HCT116 (cell line): ENCODE measurements at regions of chr3 and their contacts with region 1.

Region 1: DNA sequence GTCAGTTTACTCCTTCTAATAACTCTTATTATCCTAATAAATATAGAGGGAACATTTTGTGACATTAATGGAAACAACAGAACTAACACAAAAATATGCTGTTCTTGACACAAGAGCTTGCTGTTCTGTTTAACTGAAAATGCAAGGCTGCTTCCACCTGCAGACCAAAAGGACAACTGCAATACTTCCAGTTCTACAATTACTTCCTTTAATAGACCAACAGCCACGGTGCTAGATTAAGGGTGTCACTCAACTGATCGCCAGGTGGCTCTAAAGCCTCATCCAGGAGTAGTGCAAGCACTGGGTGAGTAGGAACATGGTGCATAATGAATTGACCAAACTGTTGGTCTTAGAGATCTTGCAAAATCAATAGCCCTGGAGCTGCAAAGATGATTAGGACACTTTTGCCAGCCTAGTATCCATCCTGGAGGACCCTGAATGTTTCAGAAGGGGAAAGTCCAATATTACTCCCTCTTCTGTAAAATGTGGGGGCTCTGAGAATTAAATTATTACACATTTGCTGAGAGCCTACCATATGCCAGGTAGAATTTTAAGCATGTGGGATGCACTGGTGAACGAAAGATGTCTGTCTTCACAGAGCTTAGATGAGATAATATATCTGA is 3.6 kb upstream of the CLDN16 start:
- DNase-seq: peak; percentile 87
- ATAC-seq: peak; percentile 98
- H3K4me3 ChIP-seq: no peak overlapping the region
- H3K27ac ChIP-seq: no peak overlapping the region
- H3K4me1 ChIP-seq: peaks cover 5 to 18% of the 10 kb centered on the region in 2 experiments; a peak in 2 of 4 replicates
- H3K27me3 ChIP-seq: no peaks in the 10 kb centered on the region
- CTCF ChIP-seq: peak; percentile 71 to 98 (median 78)
- POLR2A ChIP-seq: no peak
- RAD21 ChIP-seq: peak; percentile 98

Region 2: DNA sequence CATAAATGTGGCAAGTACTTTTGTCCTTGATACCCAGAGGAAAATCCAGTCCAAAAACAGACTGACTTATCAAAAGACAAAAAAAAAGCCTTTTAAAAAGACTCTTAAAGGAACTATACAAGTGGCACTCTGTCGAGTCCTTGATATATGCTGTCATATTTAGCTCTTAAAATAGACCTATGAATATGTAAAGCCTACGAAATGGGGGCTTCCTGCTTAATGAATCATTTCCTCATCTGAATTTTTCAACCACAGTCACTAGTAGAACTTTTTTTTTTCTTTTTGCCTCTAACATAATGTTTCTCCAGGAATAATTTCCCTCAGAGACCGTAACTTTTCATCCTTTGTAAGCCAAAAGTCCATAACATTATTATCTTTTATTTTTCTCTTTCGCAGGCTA is 359.4 kb before region 1 on chr3:
- CTCF ChIA-PET with region 1: no interaction called
- POLR2A ChIA-PET with region 1: no interaction called
- RAD21 ChIA-PET with region 1: no interaction called
- intact Hi-C with region 1: loop called (anchors 10 kb)
- DNase-seq: no peak
- ATAC-seq: no peak
- H3K4me3 ChIP-seq: no peak overlapping the region
- H3K27ac ChIP-seq: no peak overlapping the region
- H3K4me1 ChIP-seq: no peaks in the 10 kb centered on the region
- H3K27me3 ChIP-seq: no peaks in the 10 kb centered on the region
- CTCF ChIP-seq: no peak
- POLR2A ChIP-seq: no peak
- RAD21 ChIP-seq: no peak

Region 3: DNA sequence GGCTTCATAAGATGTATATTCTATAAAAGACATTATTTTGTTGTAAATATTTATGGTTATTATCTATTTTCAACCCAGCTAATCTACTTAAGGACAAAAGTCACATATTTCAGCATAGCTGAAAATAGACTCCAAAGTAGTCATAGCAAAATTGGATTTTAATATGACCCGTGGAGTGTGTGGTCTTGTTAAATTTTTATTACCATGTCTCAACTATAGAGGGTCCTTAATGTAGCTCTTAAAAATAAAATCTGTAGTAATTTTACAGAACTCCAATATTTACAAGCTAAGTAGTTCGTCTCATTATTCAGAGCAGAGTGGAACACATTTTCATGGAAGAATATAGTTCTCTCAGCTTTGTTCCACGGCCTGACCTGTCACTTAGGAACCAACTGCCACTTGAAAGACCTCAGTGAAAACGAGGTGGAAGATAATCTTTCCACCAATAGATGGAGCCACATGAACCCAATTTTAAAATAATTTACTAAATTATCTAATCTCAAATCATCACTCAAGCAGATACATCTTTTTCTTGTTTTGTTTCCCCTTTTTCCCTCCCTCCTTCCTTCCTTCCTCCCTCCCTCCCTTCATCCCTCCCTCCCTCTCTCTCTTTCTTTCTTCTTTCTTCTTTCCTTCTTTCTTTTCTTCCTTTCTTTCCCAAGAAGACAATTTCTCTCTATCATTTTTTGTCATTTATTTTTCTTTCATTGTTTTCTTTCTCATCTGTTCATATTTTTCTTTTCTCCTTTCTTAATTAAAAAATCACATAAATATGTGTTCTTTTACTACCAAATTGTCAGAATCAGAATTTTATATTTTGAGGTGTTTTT is 159.3 kb before region 1 on chr3:
- CTCF ChIA-PET with region 1: interaction called, 20 read pairs
- POLR2A ChIA-PET with region 1: no interaction called
- RAD21 ChIA-PET with region 1: no interaction called
- intact Hi-C with region 1: loop called (anchors 1 kb)
- DNase-seq: peak; percentile 10
- ATAC-seq: peak; percentile 72
- H3K4me3 ChIP-seq: no peak overlapping the region
- H3K27ac ChIP-seq: no peak overlapping the region
- H3K4me1 ChIP-seq: peaks cover 0 to 2% of the 10 kb centered on the region in 2 experiments; a peak in 1 of 4 replicates
- H3K27me3 ChIP-seq: no peaks in the 10 kb centered on the region
- CTCF ChIP-seq: peak; percentile 31 to 55 (median 52); a peak in 3 of 6 replicates
- POLR2A ChIP-seq: no peak
- RAD21 ChIP-seq: peak; percentile 71

Region 4: DNA sequence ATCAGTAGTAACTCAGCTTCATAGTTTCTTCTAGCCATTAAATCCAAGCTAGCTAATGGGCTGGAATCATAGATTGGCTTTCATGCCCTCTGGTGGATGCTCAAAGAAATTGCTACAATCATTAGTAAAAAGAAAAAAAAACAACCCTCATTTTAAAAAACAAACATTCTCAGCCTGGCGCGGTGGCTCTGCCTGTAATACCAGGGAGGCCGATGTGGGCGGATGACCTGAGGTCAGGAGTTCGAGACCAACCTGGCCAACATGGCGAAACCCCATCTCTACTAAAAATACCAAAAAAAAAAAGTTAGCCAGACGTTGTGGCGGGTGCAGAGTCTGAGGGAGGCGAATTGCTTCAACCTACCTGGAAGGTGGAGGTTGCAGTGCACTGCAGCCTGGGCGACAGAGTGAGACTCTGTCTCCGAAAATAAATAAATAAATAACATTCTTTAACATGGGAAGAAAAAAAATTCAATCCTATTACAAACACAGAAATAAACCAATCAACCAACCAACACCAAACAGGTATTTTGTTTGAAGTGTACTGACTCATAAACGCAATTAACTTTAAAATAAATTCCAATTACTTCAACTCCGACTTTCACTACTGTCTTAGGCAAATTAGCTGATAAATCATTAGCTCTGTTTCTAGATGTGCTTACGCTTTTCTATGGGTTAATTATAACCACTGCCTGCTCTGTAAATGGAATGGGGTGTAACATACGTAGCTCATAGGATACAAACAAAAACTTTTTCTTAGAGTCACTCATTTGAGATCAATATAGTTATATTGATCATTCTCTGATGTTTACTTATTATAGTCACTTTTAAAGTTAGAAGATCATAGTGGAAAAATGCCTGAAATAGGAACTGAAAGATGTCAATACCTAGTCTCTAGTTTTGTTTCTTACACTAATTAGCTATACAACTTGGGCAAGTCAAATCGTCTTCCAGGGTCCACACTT is 40.4 kb after region 1 on chr3:
- CTCF ChIA-PET with region 1: interaction called, 20 read pairs
- POLR2A ChIA-PET with region 1: interaction called, 7 read pairs
- RAD21 ChIA-PET with region 1: no interaction called
- intact Hi-C with region 1: loop called (anchors 1 kb)
- DNase-seq: peak; percentile 78
- ATAC-seq: peak; percentile 91
- H3K4me3 ChIP-seq: peak overlapping the region in 1 of 2 experiments; percentile 17; a peak in 2 of 4 replicates
- H3K27ac ChIP-seq: no peak overlapping the region
- H3K4me1 ChIP-seq: peaks cover 0 to 6% of the 10 kb centered on the region in 2 experiments; a peak in 1 of 4 replicates
- H3K27me3 ChIP-seq: no peaks in the 10 kb centered on the region
- CTCF ChIP-seq: peak; percentile 63 to 81 (median 69)
- POLR2A ChIP-seq: no peak
- RAD21 ChIP-seq: peak; percentile 74

Region 5: DNA sequence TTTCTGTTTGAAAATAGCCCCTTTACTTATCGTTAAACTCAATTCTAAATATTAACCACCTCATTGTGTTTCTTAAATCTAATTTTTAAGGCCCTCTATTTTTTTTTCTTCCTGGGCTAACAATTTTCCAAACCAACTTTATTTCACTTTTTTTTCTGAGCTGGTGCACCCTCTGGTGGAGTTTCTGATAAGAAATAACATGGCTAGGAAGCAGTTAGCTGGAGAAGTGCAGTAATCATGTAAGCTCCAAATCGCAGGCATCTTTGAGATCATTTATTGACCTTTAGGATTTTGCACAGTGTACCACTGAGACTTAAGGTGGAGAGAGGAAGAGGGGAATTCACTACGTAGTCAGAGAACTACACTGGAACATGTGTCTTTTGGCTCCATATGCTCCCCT is 58.9 kb after region 1 on chr3:
- CTCF ChIA-PET with region 1: interaction called, 10 read pairs
- POLR2A ChIA-PET with region 1: no interaction called
- RAD21 ChIA-PET with region 1: no interaction called
- intact Hi-C with region 1: loop called (anchors 1 kb)
- DNase-seq: no peak
- ATAC-seq: peak; percentile 55; the same call in 1 of the 2 replicates
- H3K4me3 ChIP-seq: no peak overlapping the region
- H3K27ac ChIP-seq: no peak overlapping the region
- H3K4me1 ChIP-seq: no peaks in the 10 kb centered on the region
- H3K27me3 ChIP-seq: no peaks in the 10 kb centered on the region
- CTCF ChIP-seq: peak; percentile 42 to 58 (median 53); a peak in 4 of 6 replicates
- POLR2A ChIP-seq: no peak
- RAD21 ChIP-seq: peak; percentile 63

Region 6: GRCh38 chr3:190701096-190701532 is 316.8 kb after region 1 on chr3:
- CTCF ChIA-PET with region 1: interaction called, 7 read pairs
- POLR2A ChIA-PET with region 1: no interaction called
- RAD21 ChIA-PET with region 1: no interaction called
- intact Hi-C with region 1: loop called (anchors 1 kb)
- DNase-seq: peak; percentile 51
- ATAC-seq: peak; percentile 94
- H3K4me3 ChIP-seq: no peak overlapping the region
- H3K27ac ChIP-seq: no peak overlapping the region
- H3K4me1 ChIP-seq: peaks cover 0 to 3% of the 10 kb centered on the region in 2 experiments; a peak in 1 of 4 replicates
- H3K27me3 ChIP-seq: no peaks in the 10 kb centered on the region
- CTCF ChIP-seq: peak; percentile 62 to 77 (median 68); a peak in 5 of 6 replicates
- POLR2A ChIP-seq: no peak
- RAD21 ChIP-seq: peak; percentile 85